GM23248 (cell line): ENCODE measurements at regions of chr11 and their contacts with region 1.

Region 1: DNA sequence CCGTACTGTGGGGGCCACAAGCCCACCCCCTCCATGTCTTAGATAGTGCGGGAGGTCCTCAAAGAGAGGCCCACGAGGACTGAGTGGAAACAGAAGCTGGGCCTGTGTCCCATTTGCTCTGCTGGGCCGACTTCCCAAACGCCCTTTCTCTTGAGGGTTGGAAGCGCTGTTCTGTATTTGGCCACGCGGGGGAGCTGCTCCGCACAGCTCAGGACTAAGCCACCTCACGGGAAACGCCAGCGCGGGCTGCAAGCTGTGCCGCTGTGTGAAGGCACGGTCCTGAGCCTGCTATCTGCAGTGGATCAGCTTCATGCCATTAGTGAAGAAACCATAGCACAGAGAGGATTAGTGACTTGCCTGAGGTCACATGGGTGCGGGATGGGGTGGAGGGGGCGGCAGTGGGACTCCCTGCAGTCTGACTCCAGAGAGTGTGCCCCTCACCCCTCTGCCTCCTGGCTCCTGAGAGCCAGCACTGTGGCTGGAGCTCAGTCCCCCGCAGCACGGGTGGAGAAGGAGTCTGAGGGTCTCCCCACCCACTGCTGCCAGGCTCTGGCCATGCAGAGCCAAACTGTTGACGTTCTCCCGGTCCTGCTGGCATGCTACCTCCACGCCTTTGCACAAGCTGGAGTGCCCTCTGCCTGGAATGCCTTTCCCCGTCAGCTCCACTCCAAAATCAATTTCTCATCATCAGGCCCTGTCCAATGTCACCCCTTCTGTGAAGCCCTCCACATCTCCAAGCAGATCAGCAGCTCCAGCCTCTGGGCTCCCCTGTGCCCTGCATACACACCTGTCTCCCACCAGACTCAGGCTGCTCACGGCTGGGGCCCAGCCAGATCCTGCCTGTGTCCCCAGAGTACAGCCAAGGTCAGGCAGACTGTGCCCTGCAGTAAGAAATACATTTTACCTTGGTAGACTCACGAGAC is 51.5 kb upstream of the LRRC32 start:
- DNase-seq: peak; percentile 88
- H3K4me3 ChIP-seq: no peak overlapping the region
- H3K27ac ChIP-seq: no peak overlapping the region
- H3K4me1 ChIP-seq: no peaks in the 10 kb centered on the region
- H3K27me3 ChIP-seq: peaks cover 33% of the 10 kb centered on the region; the same call in 1 of the 2 replicates

Region 2: DNA sequence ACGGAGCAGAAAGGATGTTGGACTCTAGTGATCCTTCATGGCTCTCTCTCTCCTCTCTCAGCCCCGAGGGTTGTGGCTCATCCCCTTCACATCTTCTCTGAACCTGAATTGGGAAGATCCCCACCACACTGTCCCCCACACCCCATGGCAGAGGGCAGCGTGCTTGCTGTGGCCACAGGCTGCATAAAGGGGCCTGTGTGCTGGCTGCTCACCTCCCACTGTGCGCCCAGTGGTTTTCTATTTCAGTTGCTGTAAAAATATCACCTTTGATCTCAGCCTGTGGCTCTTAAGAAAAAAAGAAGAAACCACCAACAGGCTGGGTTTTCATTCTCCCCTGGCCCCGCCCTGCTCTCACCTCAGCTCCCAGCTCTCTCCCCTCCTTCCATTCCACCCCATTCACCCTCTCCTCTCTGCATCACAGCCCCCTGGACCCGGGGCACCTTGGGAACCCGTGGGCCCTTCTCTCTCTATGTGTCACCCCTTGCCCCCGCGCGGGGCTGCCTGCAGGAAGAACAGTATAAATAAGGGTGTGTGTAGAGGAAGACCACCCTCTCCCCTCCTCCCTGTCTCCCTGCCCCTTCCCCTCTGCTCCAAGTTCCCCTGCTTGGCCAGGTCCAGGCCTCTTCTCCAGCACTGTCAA is 489.9 kb before region 1 on chr11:
- in situ Hi-C with region 1: no loop called
- DNase-seq: no peak
- H3K4me3 ChIP-seq: no peak overlapping the region
- H3K27ac ChIP-seq: no peak overlapping the region
- H3K4me1 ChIP-seq: 0 out of 2 replicates have a peak, but pooled peaks cover 7% of the 10 kb centered on the region
- H3K27me3 ChIP-seq: no peaks in the 10 kb centered on the region

Region 3: GRCh38 chr11:76872959-76873827 is 151.2 kb after region 1 on chr11:
- in situ Hi-C with region 1: no loop called
- DNase-seq: no peak
- H3K4me3 ChIP-seq: no peak overlapping the region
- H3K27ac ChIP-seq: no peak overlapping the region
- H3K4me1 ChIP-seq: no peaks in the 10 kb centered on the region
- H3K27me3 ChIP-seq: no peaks in the 10 kb centered on the region

Region 4: DNA sequence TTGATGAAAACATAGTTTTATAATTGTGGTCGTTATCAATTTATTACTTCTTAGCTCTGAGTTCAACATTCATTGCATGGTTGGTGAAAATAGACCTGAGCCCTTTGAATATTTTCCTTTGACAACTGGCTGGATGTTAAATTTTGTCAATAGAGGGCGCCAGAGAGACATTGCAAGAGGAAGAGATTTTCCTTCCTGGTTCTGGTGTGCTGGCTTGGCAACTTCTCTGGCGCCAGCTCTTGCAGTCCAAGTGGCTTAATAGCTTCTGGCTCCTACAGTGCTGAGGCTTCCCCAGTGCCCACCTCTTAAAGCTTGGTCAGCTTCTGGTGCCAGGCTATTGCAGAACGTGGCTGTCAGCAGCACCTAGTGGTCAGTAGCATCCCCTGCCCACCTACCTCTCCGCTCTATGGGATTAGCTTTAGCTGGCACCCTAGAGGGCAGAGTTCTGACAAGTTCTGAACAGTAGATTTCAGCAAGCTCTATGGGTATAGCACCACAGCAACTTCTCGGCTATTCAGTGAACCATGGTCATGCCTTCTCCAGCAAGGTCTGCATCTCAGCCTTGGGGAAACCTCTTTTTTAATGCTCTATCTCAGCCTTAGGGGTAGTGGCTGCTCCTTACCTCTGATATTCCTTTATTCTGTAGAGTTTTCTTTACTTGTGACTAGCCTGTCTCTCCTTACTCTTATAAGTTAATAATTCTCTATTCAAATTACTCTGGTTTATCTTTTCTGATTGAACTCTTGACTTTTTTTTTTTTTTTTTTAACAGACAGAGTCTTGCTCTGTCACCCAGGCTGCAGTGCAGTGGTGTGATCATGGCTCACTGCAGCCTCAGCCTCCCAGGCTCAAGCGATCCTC is 198.1 kb after region 1 on chr11:
- in situ Hi-C with region 1: loop called (anchors 10 kb)
- DNase-seq: peak; percentile 93
- H3K4me3 ChIP-seq: peak overlapping the region; percentile 36; the same call in 1 of the 2 replicates
- H3K27ac ChIP-seq: no peak overlapping the region
- H3K4me1 ChIP-seq: peaks cover 11% of the 10 kb centered on the region; the same call in 1 of the 2 replicates
- H3K27me3 ChIP-seq: no peaks in the 10 kb centered on the region